Activated CD4-positive, alpha-beta memory T cell treated with anti-CD3 and anti-CD28 coated beads for 36 hours (primary cell): ENCODE measurements at regions of chr2 and their contacts with region 1.

Region 1: GRCh38 chr2:190088917-190089316 is 26.4 kb upstream of the MSTN start:
- DNase-seq: peak; percentile 52
- H3K4me3 Mint-ChIP-seq: no peak overlapping the region
- H3K27ac Mint-ChIP-seq: no peak overlapping the region
- H3K4me1 Mint-ChIP-seq: no peaks in the 10 kb centered on the region
- H3K27me3 Mint-ChIP-seq: no peaks in the 10 kb centered on the region

Region 2: GRCh38 chr2:190180313-190181122 is 91.6 kb after region 1 on chr2:
- CTCF ChIA-PET with region 1: interaction called, 7 read pairs
- POLR2A ChIA-PET with region 1: no interaction called
- intact Hi-C with region 1: loop called (anchors 2 kb)
- DNase-seq: peak; percentile 32
- H3K4me3 Mint-ChIP-seq: no peak overlapping the region
- H3K27ac Mint-ChIP-seq: no peak overlapping the region
- H3K4me1 Mint-ChIP-seq: peaks cover 6% of the 10 kb centered on the region
- H3K27me3 Mint-ChIP-seq: peaks cover 19% of the 10 kb centered on the region

Region 3: DNA sequence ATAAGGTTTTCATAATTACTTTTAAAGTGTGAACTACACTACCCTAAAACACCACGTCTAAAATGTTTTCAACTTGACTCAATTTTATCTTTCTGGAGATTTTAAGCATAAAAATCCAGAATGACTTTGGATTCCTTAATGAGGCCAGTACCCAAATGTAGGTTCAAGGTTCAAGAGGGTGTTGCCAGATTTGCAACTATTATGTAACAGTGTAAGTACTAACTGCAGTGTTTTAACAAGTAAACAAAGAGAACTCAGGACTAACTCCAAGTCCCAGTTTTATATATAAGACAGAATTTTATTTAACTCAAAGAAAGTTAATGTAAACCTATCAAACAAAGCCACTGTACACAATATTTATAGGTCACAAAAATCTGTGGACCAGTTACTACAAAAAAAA is 225.0 kb after region 1 on chr2:
- CTCF ChIA-PET with region 1: interaction called, 5 read pairs
- POLR2A ChIA-PET with region 1: no interaction called
- intact Hi-C with region 1: loop called (anchors 1 kb)
- DNase-seq: no peak
- H3K4me3 Mint-ChIP-seq: no peak overlapping the region
- H3K27ac Mint-ChIP-seq: no peak overlapping the region
- H3K4me1 Mint-ChIP-seq: peaks cover 36% of the 10 kb centered on the region
- H3K27me3 Mint-ChIP-seq: no peaks in the 10 kb centered on the region

Region 4: DNA sequence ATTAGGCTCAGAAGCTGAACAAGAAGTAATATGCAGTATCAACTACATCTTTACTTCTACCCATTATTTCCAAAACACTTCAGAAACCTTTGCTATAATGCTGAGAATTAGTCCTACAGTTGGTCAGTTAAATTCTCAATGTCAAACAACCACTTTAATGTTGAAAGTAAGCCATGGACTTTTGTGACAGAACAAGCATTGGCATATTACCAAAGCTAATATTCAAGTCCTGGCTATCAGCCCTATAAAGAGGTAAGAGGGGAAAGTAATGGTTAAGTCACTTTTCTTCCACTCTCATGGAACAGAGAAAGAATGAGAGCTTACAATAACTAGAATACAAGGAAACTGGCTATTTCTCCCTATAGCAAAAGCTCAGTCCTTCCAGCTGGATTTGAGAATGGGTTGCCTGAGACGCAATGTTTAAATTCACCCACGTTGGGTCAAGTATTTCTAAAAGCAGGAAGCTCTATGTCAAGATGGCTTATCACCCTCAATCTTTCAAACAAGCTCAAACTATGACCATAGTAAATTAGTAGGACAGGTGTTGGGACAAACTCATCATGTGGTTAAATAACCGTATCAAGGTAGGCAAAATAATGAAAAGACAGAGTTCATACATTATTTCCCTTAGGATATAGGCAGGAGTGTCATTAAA is 287.8 kb after region 1 on chr2:
- CTCF ChIA-PET with region 1: interaction called, 3 read pairs
- POLR2A ChIA-PET with region 1: no interaction called
- intact Hi-C with region 1: loop called (anchors 1 kb)
- DNase-seq: no peak
- H3K4me3 Mint-ChIP-seq: no peak overlapping the region
- H3K27ac Mint-ChIP-seq: no peak overlapping the region
- H3K4me1 Mint-ChIP-seq: no peaks in the 10 kb centered on the region
- H3K27me3 Mint-ChIP-seq: no peaks in the 10 kb centered on the region